Endothelial cell of umbilical vein (primary cell): ENCODE measurements at regions of chr17 and their contacts with region 1.

Region 1: DNA sequence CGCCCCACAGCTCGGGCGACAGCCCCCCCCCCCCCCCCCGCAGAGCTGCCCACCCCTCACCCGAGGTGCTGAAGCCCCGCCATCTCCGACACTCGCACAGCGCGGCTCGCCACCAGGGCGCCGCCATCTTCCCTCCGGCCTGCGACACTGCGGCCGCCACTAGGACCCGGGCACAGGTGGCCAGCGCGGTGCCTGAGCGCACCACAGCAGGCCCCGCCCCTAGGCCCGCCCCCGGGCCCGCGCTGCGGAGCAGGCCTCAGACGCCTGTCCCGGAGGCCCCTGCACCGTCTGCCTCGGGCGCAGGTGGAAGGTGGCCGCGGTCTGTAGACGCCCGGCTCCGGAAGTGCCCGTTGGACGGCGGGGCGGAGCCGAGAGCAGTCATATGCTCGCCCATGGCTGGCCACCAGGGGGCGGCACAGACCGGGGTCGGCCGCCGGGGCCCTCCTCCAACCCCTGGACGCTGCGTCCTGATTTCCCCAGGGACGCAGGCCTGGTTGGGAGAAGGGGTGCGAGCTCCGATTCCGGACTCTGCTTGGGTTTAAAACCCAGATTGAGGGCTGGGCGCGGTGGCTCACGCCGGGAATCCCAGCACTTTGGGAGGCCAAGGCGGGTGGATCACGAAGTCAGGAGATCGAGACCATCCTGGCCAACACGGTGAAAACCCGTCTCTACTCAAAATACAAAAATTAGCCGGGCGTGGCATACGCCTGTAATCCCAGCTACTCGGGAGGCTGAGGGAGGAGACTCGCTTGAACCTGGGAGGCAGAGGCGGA is at the start of gene MRPL38:
- DNase-seq: peak; percentile 96
- H3K4me3 ChIP-seq: peak within 1 kb of the TSS; percentile 61 to 90 (median 77)
- H3K27ac ChIP-seq: peak within 1 kb of the TSS; percentile 74
- H3K4me1 ChIP-seq: peaks cover 14% of the 10 kb centered on the region
- H3K27me3 ChIP-seq: no peaks in the 10 kb centered on the region
- CTCF ChIP-seq: peak; percentile 97 to 99
- POLR2A ChIP-seq: no peak
- total RNA-seq, gene MRPL38: 93.8 and 94.4 TPM in 2 replicates

Region 2: GRCh38 chr17:75920045-75920560 is 15.2 kb after region 1 on chr17:
- CTCF ChIA-PET with region 1: interaction called, 12 read pairs
- POLR2A ChIA-PET with region 1: interaction called, 3 read pairs
- dilution Hi-C with region 1: no loop called
- intact Hi-C with region 1: no loop called
- DNase-seq: no peak
- H3K4me3 ChIP-seq: no peak overlapping the region
- H3K27ac ChIP-seq: no peak overlapping the region
- H3K4me1 ChIP-seq: no peaks in the 10 kb centered on the region
- H3K27me3 ChIP-seq: no peaks in the 10 kb centered on the region
- CTCF ChIP-seq: no peak
- POLR2A ChIP-seq: no peak

Region 3: DNA sequence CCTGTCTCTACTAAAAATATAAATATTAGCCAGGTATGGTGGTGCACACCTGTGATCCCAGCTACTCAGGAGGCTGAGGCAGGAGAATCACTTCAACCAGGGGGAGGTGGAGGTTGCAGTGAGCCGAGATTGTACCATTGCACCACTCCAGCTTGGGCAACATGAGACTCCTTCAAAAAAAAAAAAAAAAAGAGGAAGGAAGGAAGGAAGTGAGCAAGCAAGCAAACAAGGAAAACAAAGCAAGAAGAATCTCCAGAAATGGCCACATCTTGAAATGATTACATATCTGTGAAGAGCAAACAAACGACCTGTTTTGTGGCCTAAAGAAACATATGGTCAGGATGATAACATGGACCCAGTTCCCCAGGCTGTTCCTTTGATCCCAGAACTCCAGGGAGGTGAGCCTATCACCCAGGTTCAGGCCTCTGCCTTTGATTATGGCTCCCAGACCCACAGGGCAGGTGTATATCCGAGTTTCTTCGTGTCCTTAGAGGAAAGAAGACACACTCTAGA is 65.1 kb after region 1 on chr17:
- CTCF ChIA-PET with region 1: interaction called, 3 read pairs
- POLR2A ChIA-PET with region 1: no interaction called
- dilution Hi-C with region 1: no loop called
- intact Hi-C with region 1: loop called (anchors 2 kb)
- DNase-seq: peak; percentile 72
- H3K4me3 ChIP-seq: no peak overlapping the region
- H3K27ac ChIP-seq: peak overlapping the region; percentile 88
- H3K4me1 ChIP-seq: peaks cover 17% of the 10 kb centered on the region
- H3K27me3 ChIP-seq: no peaks in the 10 kb centered on the region
- CTCF ChIP-seq: no peak
- POLR2A ChIP-seq: no peak

Region 4: GRCh38 chr17:76005263-76006149 is 100.6 kb after region 1 on chr17:
- CTCF ChIA-PET with region 1: interaction called, 95 read pairs
- POLR2A ChIA-PET with region 1: no interaction called
- dilution Hi-C with region 1: no loop called
- intact Hi-C with region 1: loop called (anchors 1 kb)
- DNase-seq: peak; percentile 64
- H3K4me3 ChIP-seq: no peak overlapping the region
- H3K27ac ChIP-seq: no peak overlapping the region
- H3K4me1 ChIP-seq: no peaks in the 10 kb centered on the region
- H3K27me3 ChIP-seq: no peaks in the 10 kb centered on the region
- CTCF ChIP-seq: peak; percentile 59 to 65
- POLR2A ChIP-seq: no peak